SK-N-SH (cell line): ENCODE measurements at regions of chr2 and their contacts with region 1.

Region 1: GRCh38 chr2:43484323-43484930 is 111.4 kb downstream of the THADA start:
- DNase-seq: peak; percentile 48
- H3K4me3 ChIP-seq: no peak overlapping the region
- H3K27ac ChIP-seq: peak overlapping the region; percentile 10 to 81; a peak in 3 of 4 replicates
- H3K4me1 ChIP-seq: peaks cover 0 to 15% of the 10 kb centered on the region in 2 experiments; a peak in 2 of 4 replicates
- H3K27me3 ChIP-seq: no peaks in the 10 kb centered on the region
- CTCF ChIP-seq: peak; percentile 86
- EP300 ChIP-seq: no peak
- RAD21 ChIP-seq: peak; percentile 94

Region 2: GRCh38 chr2:42859006-42859552 is 625.3 kb before region 1 on chr2:
- CTCF ChIA-PET with region 1: interaction called, 25 read pairs
- POLR2A ChIA-PET with region 1: no interaction called
- DNase-seq: peak; percentile 86
- H3K4me3 ChIP-seq: no peak overlapping the region
- H3K27ac ChIP-seq: no peak overlapping the region
- H3K4me1 ChIP-seq: peaks cover 0 to 22% of the 10 kb centered on the region in 2 experiments; a peak in 1 of 4 replicates
- H3K27me3 ChIP-seq: no peaks in the 10 kb centered on the region
- CTCF ChIP-seq: peak; percentile 98
- EP300 ChIP-seq: no peak
- RAD21 ChIP-seq: peak; percentile 98

Region 3: DNA sequence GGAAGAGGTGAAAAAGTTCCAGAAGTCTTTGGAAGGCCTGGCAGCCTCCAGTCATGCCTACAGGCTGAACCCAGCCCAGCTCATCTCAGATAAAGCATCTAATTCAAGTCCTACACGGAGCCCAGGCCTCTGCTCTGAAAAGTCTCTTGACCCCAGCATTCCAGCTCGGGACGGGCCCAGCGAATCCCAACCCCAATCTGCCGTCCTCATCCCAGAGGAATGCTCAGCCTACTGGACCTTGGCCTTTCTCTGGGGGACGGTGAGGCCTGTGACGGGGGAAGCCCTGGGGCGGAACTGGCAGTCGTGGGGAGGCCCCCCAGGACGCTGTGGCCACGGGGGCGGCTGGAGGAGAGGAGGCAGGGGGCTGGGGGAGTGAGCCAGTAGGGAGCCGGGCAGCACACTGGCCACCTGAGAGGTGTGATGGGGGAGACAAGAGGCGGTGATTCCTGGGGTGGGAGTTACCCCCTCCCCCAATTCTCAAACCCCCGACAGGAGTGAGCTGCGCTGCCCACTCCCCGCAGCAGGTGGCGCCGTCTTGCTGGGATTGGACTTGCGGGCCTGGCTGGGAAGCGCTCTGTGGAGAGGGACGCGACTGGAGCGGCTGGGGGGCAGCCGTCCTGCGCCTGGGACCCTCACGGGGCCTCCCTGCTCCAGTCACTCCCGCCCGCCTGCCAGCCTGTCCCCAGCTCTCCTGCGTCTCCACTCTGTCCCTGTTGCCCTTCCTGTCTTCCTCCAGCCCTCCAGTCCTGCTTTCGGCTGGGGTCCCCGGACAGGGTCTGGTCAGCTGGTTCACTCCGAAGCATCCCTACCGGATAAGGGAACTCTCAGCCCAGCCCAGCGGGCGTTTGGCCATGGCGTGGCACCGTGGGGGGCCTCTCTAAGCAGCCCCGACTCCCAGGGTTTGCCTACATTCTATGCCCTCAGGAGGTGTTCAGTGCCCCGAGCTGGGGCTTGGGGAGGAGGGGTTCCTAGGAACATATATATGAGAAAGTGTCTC is 509.4 kb before region 1 on chr2:
- CTCF ChIA-PET with region 1: interaction called, 107 read pairs
- POLR2A ChIA-PET with region 1: no interaction called
- DNase-seq: peak; percentile 95
- H3K4me3 ChIP-seq: peak overlapping the region; percentile 27 to 32; a peak in 3 of 4 replicates
- H3K27ac ChIP-seq: no peak overlapping the region; a peak in 1 of 4 replicates
- H3K4me1 ChIP-seq: peaks cover 11 to 14% of the 10 kb centered on the region in 2 experiments; a peak in 3 of 4 replicates
- H3K27me3 ChIP-seq: no peaks in the 10 kb centered on the region
- CTCF ChIP-seq: peak; percentile 95
- EP300 ChIP-seq: no peak
- RAD21 ChIP-seq: peak; percentile 97

Region 4: GRCh38 chr2:43149482-43150107 is 334.8 kb before region 1 on chr2:
- CTCF ChIA-PET with region 1: no interaction called
- POLR2A ChIA-PET with region 1: no interaction called
- DNase-seq: no peak
- H3K4me3 ChIP-seq: no peak overlapping the region
- H3K27ac ChIP-seq: no peak overlapping the region
- H3K4me1 ChIP-seq: peaks cover 0 to 12% of the 10 kb centered on the region in 2 experiments; a peak in 1 of 4 replicates
- H3K27me3 ChIP-seq: no peaks in the 10 kb centered on the region
- CTCF ChIP-seq: no peak
- EP300 ChIP-seq: no peak
- RAD21 ChIP-seq: no peak

Region 5: DNA sequence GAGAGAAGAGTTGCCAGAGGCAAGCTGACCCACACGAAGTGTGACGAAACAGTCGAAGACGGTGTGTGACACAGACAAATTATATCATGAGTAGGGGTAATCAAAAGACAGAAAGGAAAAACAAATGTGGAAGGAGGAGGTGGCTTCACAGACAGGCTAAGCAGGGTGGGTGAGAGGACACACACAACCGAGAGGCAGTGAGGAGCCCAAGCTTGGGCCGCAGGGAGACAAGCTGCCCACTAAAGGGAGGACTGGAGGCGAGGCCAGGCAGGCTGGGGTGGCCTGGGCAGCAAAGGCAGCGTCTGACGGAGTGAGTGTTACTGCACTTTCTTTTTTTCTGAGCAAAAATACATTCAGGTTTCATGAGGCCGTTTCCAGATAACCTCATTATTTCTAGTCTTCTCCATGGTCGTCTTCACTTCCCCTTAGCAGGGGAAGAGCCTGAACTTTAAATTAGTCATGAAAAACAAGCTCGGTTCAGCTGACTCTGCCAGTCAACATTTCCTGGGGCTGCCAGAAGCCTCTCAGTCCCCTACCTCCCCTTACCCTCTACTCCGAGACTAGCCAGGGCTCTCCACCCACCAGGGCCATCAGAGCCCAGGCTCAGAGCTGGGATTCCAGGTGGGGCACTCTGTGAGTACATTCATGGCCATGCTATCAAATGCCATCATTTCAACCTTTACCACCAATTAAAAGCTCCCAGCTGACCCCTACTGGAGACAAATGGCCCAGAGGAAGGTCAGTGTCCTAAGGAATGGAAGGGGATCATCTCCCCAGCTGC is 244.3 kb before region 1 on chr2:
- CTCF ChIA-PET with region 1: interaction called, 15 read pairs
- POLR2A ChIA-PET with region 1: no interaction called
- DNase-seq: no peak
- H3K4me3 ChIP-seq: no peak overlapping the region
- H3K27ac ChIP-seq: no peak overlapping the region
- H3K4me1 ChIP-seq: peaks cover 0 to 6% of the 10 kb centered on the region in 2 experiments; a peak in 1 of 4 replicates
- H3K27me3 ChIP-seq: no peaks in the 10 kb centered on the region
- CTCF ChIP-seq: 0 out of 2 replicates have a peak, but pooled peaks have one; percentile 21
- EP300 ChIP-seq: no peak
- RAD21 ChIP-seq: no peak; the same call in 1 of the 2 replicates

Region 6: DNA sequence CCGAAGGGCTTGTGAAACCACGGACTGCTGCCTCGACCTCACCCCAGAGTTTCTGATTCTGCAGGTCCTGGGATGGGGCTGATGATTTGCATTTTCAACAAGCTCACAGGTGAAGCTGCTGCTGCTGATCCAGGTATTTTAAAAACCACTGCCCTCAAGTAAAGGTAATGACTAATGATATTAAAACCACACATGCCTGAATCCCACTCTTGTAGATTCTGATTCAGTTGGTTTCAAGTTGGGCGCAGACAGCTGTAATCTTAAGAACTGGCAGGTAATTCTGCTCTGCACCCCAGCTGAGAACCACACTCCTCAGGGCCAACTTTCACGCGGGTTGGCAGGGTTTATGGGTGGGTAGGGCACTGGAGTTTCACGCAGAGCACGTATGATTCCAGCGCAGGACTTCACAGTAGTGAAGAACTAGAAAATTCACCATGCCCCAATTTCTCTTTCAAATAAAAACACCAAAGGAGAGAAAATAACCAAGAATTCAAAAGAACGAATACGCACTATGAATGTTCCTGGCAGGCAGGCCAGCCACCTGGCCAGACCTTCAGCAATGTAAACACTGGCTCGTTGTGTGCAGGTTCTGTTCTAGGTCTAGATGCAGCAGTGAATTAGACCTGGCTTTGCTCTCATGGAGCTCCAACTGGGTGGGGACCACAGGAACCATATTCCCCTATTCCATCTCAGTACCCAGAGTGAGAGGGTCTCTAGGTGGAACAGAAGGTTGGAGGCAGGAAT is 183.4 kb before region 1 on chr2:
- CTCF ChIA-PET with region 1: no interaction called
- POLR2A ChIA-PET with region 1: no interaction called
- DNase-seq: no peak
- H3K4me3 ChIP-seq: no peak overlapping the region
- H3K27ac ChIP-seq: peak overlapping the region in 1 of 2 experiments; percentile 37; a peak in 1 of 4 replicates
- H3K4me1 ChIP-seq: peaks cover 0 to 13% of the 10 kb centered on the region in 2 experiments; a peak in 2 of 4 replicates
- H3K27me3 ChIP-seq: no peaks in the 10 kb centered on the region
- CTCF ChIP-seq: no peak
- EP300 ChIP-seq: no peak
- RAD21 ChIP-seq: no peak

Region 7: GRCh38 chr2:43328133-43328532 is 156.3 kb before region 1 on chr2:
- CTCF ChIA-PET with region 1: interaction called, 14 read pairs
- POLR2A ChIA-PET with region 1: no interaction called
- DNase-seq: no peak
- H3K4me3 ChIP-seq: no peak overlapping the region
- H3K27ac ChIP-seq: peak overlapping the region in 1 of 2 experiments; percentile 48; a peak in 2 of 4 replicates
- H3K4me1 ChIP-seq: peaks cover 12 to 43% of the 10 kb centered on the region in 2 experiments; a peak in 3 of 4 replicates
- H3K27me3 ChIP-seq: no peaks in the 10 kb centered on the region
- CTCF ChIP-seq: no peak
- EP300 ChIP-seq: no peak
- RAD21 ChIP-seq: no peak

Region 8: GRCh38 chr2:43467891-43468290 is 16.5 kb before region 1 on chr2:
- CTCF ChIA-PET with region 1: interaction called, 37 read pairs
- POLR2A ChIA-PET with region 1: no interaction called
- DNase-seq: no peak
- H3K4me3 ChIP-seq: no peak overlapping the region
- H3K27ac ChIP-seq: peak overlapping the region; percentile 53 to 79
- H3K4me1 ChIP-seq: peaks cover 3 to 21% of the 10 kb centered on the region in 2 experiments
- H3K27me3 ChIP-seq: no peaks in the 10 kb centered on the region
- CTCF ChIP-seq: no peak
- EP300 ChIP-seq: peak in 1 of 2 experiments; percentile 60; a peak in 1 of 4 replicates
- RAD21 ChIP-seq: no peak

Region 9: GRCh38 chr2:43576981-43577892 is 92.8 kb after region 1 on chr2:
- CTCF ChIA-PET with region 1: interaction called, 11 read pairs
- POLR2A ChIA-PET with region 1: no interaction called
- DNase-seq: peak; percentile 49
- H3K4me3 ChIP-seq: no peak overlapping the region
- H3K27ac ChIP-seq: peak overlapping the region in 1 of 2 experiments; percentile 57; a peak in 1 of 4 replicates
- H3K4me1 ChIP-seq: no peaks in the 10 kb centered on the region
- H3K27me3 ChIP-seq: no peaks in the 10 kb centered on the region
- CTCF ChIP-seq: peak; percentile 99
- EP300 ChIP-seq: no peak
- RAD21 ChIP-seq: peak; percentile 68